ENCODE measurements at regions of chr14 and their contacts with region 1.

Region 1: GRCh38 chr14:89027097-89027740 is 202.8 kb downstream of the TTC8 start:
- DNase-seq: peak; percentile 79
- ATAC-seq: peak; percentile 91
- H3K4me3 ChIP-seq: peak overlapping the region; percentile 8 to 74 (median 53)
- H3K4me3 Mint-ChIP-seq: peak overlapping the region; percentile 76
- H3K27ac ChIP-seq: no peak overlapping the region
- H3K27ac Mint-ChIP-seq: no peak overlapping the region
- H3K4me1 ChIP-seq: peaks cover 13% of the 10 kb centered on the region in 2 donors
- H3K4me1 Mint-ChIP-seq: peaks cover 4% of the 10 kb centered on the region
- H3K27me3 ChIP-seq: peaks cover 0 to 52% (median 28%) of the 10 kb centered on the region in 4 experiments
- H3K27me3 Mint-ChIP-seq: peaks cover 66% of the 10 kb centered on the region
- CTCF ChIP-seq: peak; percentile 93

Region 2: DNA sequence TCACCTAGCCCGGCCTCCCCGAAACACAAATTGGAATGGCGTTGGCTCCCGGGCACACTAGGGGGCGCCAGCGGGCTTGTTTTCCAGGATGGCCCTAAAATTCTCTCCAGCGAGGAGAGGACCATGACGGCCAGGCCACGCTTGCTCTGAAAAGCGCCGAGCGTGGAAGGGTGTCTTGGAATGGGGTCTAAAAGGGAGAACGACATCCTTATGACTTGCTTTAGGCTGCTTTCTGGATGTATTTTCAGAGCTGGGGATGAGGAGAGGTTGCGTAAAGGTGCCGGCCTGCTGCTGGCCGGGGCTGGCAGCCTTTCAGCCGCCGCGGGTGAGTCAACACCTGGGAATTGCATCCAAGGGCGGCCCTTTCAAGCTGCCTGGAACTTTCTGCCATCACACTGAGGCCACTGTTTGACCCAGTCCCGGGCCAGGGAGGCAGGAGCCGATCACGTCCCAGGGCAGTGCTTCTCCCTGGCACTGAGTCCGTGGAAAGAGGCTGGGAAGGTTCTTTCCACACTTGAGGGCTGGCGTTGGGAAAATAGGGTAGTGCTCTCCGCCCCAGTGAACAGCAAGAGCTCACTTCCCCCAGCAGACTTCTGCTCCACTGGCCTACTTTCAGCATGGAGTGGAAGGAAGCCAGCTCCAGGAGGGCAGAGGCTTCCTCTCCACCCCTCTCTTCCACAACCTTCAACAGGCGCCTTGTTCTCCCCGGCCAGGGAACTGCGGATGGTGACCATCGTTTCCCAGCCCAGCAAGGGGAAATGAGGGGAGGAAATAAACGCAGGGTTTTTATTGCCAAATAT is 13.4 kb after region 1 on chr14:
- CTCF ChIA-PET with region 1: interaction called, 20 read pairs
- POLR2A ChIA-PET with region 1: no interaction called
- intact Hi-C with region 1: no loop called
- DNase-seq: peak; percentile 79
- ATAC-seq: peak; percentile 68
- H3K4me3 ChIP-seq: peak overlapping the region in 4 of 5 experiments; percentile 35 to 63 (median 42)
- H3K4me3 Mint-ChIP-seq: peak overlapping the region; percentile 85
- H3K27ac ChIP-seq: no peak overlapping the region
- H3K27ac Mint-ChIP-seq: no peak overlapping the region
- H3K4me1 ChIP-seq: peaks cover 15% of the 10 kb centered on the region in 2 donors
- H3K4me1 Mint-ChIP-seq: peaks cover 15% of the 10 kb centered on the region
- H3K27me3 ChIP-seq: peaks cover 0 to 12% (median 7%) of the 10 kb centered on the region in 4 experiments
- H3K27me3 Mint-ChIP-seq: peaks cover 47% of the 10 kb centered on the region
- CTCF ChIP-seq: peak; percentile 85

Region 3: DNA sequence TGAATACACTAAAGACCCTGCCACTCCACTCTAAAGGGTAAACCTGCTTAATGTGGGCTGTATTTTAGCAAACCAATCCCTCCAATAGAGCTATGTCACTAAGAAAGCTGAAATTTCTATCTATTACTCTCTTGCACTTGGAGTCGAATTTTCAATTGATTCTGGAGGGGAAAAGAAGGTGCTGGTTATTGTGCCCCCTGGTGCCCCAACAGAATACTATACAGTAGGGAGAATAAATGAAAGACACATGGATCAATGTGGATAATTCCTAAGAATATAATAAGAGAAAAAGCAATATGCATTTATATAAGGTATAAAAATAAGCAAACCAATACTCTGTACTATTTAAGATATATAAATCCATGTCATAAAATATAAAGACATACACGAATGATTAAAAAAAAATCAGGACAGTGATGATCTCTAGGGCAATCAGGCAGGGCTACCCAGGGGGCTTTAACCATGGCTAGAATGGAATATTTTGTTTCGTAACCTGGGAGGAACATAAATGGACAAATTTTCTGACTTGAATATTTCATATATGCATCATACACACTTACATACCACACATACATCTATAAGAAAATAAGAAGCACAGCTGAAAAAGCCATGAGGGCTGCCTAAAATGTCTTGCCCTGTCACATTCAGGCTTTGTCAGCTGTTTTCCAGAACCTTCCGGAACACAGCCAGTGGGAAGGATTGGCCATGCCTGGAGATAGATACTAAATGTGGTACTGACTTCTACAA is 872.9 kb after region 1 on chr14:
- CTCF ChIA-PET with region 1: interaction called, 10 read pairs
- POLR2A ChIA-PET with region 1: no interaction called
- intact Hi-C with region 1: loop called (anchors 5 kb)
- DNase-seq: peak; percentile 41
- ATAC-seq: no peak
- H3K4me3 ChIP-seq: no peak overlapping the region
- H3K4me3 Mint-ChIP-seq: no peak overlapping the region
- H3K27ac ChIP-seq: no peak overlapping the region
- H3K27ac Mint-ChIP-seq: no peak overlapping the region
- H3K4me1 ChIP-seq: no peaks in the 10 kb centered on the region
- H3K4me1 Mint-ChIP-seq: no peaks in the 10 kb centered on the region
- H3K27me3 ChIP-seq: no peaks in the 10 kb centered on the region
- H3K27me3 Mint-ChIP-seq: no peaks in the 10 kb centered on the region
- CTCF ChIP-seq: peak; percentile 66

Region 4: GRCh38 chr14:89915114-89915878 is 888.1 kb after region 1 on chr14:
- CTCF ChIA-PET with region 1: interaction called, 45 read pairs
- POLR2A ChIA-PET with region 1: no interaction called
- intact Hi-C with region 1: loop called (anchors 1 kb)
- DNase-seq: peak; percentile 72
- ATAC-seq: peak; percentile 54
- H3K4me3 ChIP-seq: no peak overlapping the region
- H3K4me3 Mint-ChIP-seq: no peak overlapping the region
- H3K27ac ChIP-seq: no peak overlapping the region
- H3K27ac Mint-ChIP-seq: no peak overlapping the region
- H3K4me1 ChIP-seq: no peaks in the 10 kb centered on the region
- H3K4me1 Mint-ChIP-seq: peaks cover 3% of the 10 kb centered on the region
- H3K27me3 ChIP-seq: no peaks in the 10 kb centered on the region
- H3K27me3 Mint-ChIP-seq: peaks cover 3% of the 10 kb centered on the region
- CTCF ChIP-seq: peak; percentile 98

Region 5: GRCh38 chr14:89921346-89921745 is 894.1 kb after region 1 on chr14:
- CTCF ChIA-PET with region 1: interaction called, 45 read pairs
- POLR2A ChIA-PET with region 1: no interaction called
- intact Hi-C with region 1: no loop called
- DNase-seq: no peak
- ATAC-seq: no peak
- H3K4me3 ChIP-seq: no peak overlapping the region
- H3K4me3 Mint-ChIP-seq: no peak overlapping the region
- H3K27ac ChIP-seq: no peak overlapping the region
- H3K27ac Mint-ChIP-seq: no peak overlapping the region
- H3K4me1 ChIP-seq: no peaks in the 10 kb centered on the region
- H3K4me1 Mint-ChIP-seq: no peaks in the 10 kb centered on the region
- H3K27me3 ChIP-seq: no peaks in the 10 kb centered on the region
- H3K27me3 Mint-ChIP-seq: no peaks in the 10 kb centered on the region
- CTCF ChIP-seq: no peak

Measured in B cell (primary cell).